ENCODE measurements at regions of chr18 and their contacts with region 1.

Region 1: DNA sequence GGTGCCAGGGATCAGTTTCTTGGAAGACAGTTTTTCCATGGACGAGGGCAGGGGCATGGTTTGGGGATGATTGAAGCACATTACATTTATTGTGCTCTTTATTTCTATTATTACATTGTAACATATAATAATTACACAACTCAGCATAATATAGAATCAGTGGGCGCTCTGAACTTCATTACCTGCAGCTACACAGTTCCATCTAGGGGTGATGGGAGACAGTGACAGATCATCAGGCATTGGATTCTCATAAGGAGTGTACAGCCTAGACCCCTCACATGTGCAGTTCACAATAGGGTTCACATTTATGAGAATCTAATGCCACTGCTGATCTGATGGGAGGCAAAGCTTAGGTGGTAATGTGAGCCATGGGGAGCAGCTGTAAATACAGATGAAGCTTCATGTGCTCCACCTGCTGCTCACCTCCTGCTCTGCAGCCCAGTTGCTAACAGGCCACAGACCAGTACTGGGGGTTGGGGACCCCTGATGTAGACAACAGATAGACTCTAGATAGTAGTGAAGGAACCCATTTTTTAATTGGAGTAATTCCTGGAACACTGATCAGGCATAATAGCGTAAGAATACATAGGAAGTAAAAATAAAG is 41.5 kb upstream of the MC4R start:
- DNase-seq: no peak
- ATAC-seq: no peak
- H3K4me3 ChIP-seq: no peak overlapping the region
- H3K4me3 Mint-ChIP-seq: no peak overlapping the region
- H3K27ac ChIP-seq: no peak overlapping the region
- H3K27ac Mint-ChIP-seq: no peak overlapping the region
- H3K4me1 ChIP-seq: no peaks in the 10 kb centered on the region
- H3K4me1 Mint-ChIP-seq: no peaks in the 10 kb centered on the region
- H3K27me3 ChIP-seq: no peaks in the 10 kb centered on the region
- H3K27me3 Mint-ChIP-seq: no peaks in the 10 kb centered on the region

Region 2: DNA sequence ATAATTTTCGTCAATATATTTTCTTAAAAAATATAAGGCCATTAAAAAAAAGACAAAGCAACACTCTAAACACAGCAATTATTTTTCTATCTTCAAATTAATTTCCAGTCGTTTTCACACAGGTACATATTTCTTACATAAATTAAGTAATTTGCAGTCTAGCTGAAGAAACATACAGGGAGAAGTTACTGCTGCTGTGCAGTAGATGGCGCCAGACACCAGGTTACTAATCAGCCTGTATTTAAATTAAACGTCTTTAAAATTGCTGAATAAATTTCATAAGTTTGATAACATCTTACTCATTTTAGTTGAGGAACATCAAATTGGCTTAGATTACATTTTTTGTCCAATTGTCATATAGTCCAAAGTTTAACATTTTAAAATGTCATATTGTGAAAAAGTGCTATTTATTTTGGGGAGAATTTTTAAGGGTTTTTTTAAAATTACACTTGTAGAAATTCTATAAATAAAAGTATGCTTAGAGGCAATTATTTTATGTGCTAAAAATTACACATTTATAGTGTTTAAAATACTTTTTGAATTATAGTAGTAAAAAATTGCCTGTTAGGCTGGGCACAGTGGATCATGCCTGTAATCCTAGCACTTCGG is 425.8 kb before region 1 on chr18:
- CTCF ChIA-PET with region 1: no interaction called
- POLR2A ChIA-PET with region 1: no interaction called
- intact Hi-C with region 1: loop called in 1 of 2 experiments (anchors 1 kb)
- DNase-seq: peak in 5 of 9 donors; percentile 19 to 37 (median 24)
- ATAC-seq: peak; percentile 54
- H3K4me3 ChIP-seq: no peak overlapping the region
- H3K4me3 Mint-ChIP-seq: no peak overlapping the region
- H3K27ac ChIP-seq: no peak overlapping the region
- H3K27ac Mint-ChIP-seq: no peak overlapping the region
- H3K4me1 ChIP-seq: no peaks in the 10 kb centered on the region
- H3K4me1 Mint-ChIP-seq: peaks cover 0 to 2% (median 0%) of the 10 kb centered on the region in 7 donors
- H3K27me3 ChIP-seq: no peaks in the 10 kb centered on the region
- H3K27me3 Mint-ChIP-seq: peaks cover 24 to 28% (median 27%) of the 10 kb centered on the region in 5 donors

Region 3: GRCh38 chr18:61019338-61020301 is 605.6 kb after region 1 on chr18:
- CTCF ChIA-PET with region 1: no interaction called
- POLR2A ChIA-PET with region 1: no interaction called
- intact Hi-C with region 1: no loop called
- DNase-seq: no peak
- ATAC-seq: no peak
- H3K4me3 ChIP-seq: no peak overlapping the region
- H3K4me3 Mint-ChIP-seq: no peak overlapping the region
- H3K27ac ChIP-seq: no peak overlapping the region
- H3K27ac Mint-ChIP-seq: no peak overlapping the region
- H3K4me1 ChIP-seq: no peaks in the 10 kb centered on the region
- H3K4me1 Mint-ChIP-seq: no peaks in the 10 kb centered on the region
- H3K27me3 ChIP-seq: no peaks in the 10 kb centered on the region
- H3K27me3 Mint-ChIP-seq: no peaks in the 10 kb centered on the region